Tibial artery (tissue), 4 donors: ENCODE measurements at regions of chr11 and their contacts with region 1.

Region 1: GRCh38 chr11:12673924-12674570 is at the start of gene TEAD1:
- DNase-seq: peak; percentile 89 to 98
- H3K4me3 ChIP-seq: peak within 1 kb of the TSS; percentile 70 to 79
- H3K27ac ChIP-seq: peak within 1 kb of the TSS; percentile 88 to 91
- H3K4me1 ChIP-seq: peaks cover 0 to 29% (median 13%) of the 10 kb centered on the region in 4 donors
- H3K27me3 ChIP-seq: no peaks in the 10 kb centered on the region
- CTCF ChIP-seq: no peak

Region 2: GRCh38 chr11:12331239-12331874 is 342.7 kb before region 1 on chr11:
- intact Hi-C with region 1: loop called (anchors 5 kb)
- DNase-seq: peak; percentile 80 to 86
- H3K4me3 ChIP-seq: no peak overlapping the region
- H3K27ac ChIP-seq: no peak overlapping the region
- H3K4me1 ChIP-seq: peaks cover 0 to 8% (median 0%) of the 10 kb centered on the region in 4 donors
- H3K27me3 ChIP-seq: no peaks in the 10 kb centered on the region
- CTCF ChIP-seq: peak; percentile 74 to 90

Region 3: GRCh38 chr11:12792590-12792989 is 118.5 kb after region 1 on chr11:
- intact Hi-C with region 1: loop called (anchors 10 kb)
- DNase-seq: no peak
- H3K4me3 ChIP-seq: no peak overlapping the region
- H3K27ac ChIP-seq: peak overlapping the region in 1 of 2 donors; percentile 28
- H3K4me1 ChIP-seq: peaks cover 0 to 55% (median 21%) of the 10 kb centered on the region in 4 donors
- H3K27me3 ChIP-seq: no peaks in the 10 kb centered on the region
- CTCF ChIP-seq: no peak